AG04449 (cell line): ENCODE measurements at regions of chr18 and their contacts with region 1.

Region 1: DNA sequence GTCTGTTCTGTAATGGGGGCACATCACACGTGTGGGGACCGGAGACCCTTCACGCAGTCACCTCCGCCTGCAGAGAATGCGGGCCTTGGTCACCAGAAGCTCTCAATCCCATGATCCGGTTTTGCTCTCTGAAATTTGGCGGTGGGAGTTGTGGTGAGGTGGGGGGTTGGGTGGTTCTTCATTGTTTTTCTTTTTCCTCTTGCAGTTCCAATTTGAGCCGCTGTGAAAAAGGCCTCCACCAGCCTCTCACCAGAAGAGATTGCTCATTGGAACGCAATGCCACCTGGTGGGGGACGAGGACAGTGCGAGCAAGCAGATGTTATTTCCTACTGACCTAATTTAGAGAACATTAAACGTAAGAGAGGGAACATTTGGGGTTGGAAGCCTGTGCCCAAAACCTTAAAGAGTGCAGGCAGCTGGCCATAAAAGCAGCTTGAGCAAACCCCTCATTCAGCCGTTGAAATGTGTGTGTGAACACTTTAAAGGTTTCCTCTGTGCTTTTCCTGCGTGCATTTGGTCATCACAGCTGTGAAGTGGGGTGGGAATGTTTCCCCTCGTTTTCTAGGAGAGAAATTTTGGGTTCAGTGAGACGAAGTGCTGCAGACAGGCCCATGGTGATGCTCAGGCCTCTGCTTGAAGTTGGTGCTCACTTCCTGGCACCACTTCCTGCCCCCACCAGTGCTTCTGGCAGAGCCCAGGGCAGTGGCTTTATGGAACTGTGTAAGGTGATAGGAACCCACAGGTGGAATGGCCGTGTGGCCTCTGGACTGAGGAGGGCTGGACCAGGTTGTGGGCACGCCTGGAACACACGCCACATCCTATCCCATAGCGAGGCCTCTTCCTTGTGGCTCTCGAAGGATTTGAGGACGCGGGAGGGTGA is 61.7 kb downstream of the ZCCHC2 start:
- DNase-seq: peak; percentile 49
- H3K4me3 ChIP-seq: no peak overlapping the region; the same call in 1 of the 2 replicates
- CTCF ChIP-seq: peak; percentile 98

Region 2: GRCh38 chr18:62437235-62438017 is 147.1 kb before region 1 on chr18:
- CTCF ChIA-PET with region 1: interaction called, 11 read pairs
- POLR2A ChIA-PET with region 1: no interaction called
- DNase-seq: no peak
- H3K4me3 ChIP-seq: no peak overlapping the region
- CTCF ChIP-seq: no peak

Region 3: DNA sequence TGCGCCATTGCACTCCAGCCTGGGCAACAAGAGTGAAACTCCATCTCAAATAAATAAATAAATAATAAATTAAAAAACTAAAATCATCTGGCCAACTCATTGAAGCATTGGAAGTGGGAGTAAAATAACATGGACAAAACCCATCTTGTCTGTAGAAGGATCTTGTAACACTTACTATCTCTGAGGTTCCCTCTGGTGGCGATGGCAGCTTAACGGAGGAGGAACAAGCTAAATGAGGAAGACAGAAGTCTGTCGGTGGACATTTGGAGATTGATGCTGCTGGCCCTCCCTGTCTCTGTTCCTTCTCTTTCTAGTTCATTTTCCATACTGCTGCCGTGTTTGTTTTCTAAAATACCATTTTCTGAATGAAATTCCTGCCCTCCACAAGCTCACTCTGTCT is 18.3 kb before region 1 on chr18:
- CTCF ChIA-PET with region 1: interaction called, 43 read pairs
- POLR2A ChIA-PET with region 1: no interaction called
- DNase-seq: no peak
- H3K4me3 ChIP-seq: no peak overlapping the region
- CTCF ChIP-seq: peak; percentile 14

Region 4: GRCh38 chr18:62596145-62597005 is 11.9 kb after region 1 on chr18:
- CTCF ChIA-PET with region 1: interaction called, 59 read pairs
- POLR2A ChIA-PET with region 1: no interaction called
- DNase-seq: no peak
- H3K4me3 ChIP-seq: peak overlapping the region; percentile 20
- CTCF ChIP-seq: no peak

Region 5: GRCh38 chr18:62714671-62715435 is 130.4 kb after region 1 on chr18:
- CTCF ChIA-PET with region 1: interaction called, 24 read pairs
- POLR2A ChIA-PET with region 1: no interaction called
- DNase-seq: peak; percentile 99
- H3K4me3 ChIP-seq: peak overlapping the region; percentile 76
- CTCF ChIP-seq: peak; percentile 76

Region 6: DNA sequence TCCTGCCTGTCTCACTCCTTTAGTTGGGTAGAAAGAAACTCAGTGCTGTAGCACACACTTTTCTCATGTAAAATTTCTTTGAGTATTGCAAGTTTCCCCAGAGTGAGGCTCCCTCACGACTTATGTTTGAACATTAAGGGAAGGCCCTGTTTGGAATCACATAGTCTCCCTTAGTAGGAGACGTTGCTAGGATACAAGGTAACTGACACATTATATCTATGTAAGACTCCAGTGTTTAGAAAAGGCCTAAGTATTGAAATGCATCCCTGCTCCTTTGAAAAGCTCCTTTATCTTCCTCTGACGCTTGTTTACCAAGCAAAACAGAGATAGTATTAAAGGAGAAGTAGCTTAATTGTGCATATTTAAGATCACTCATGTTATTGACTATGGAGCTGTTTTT is 379.0 kb after region 1 on chr18:
- CTCF ChIA-PET with region 1: interaction called, 42 read pairs
- POLR2A ChIA-PET with region 1: no interaction called
- DNase-seq: no peak
- H3K4me3 ChIP-seq: no peak overlapping the region
- CTCF ChIP-seq: no peak

Region 7: DNA sequence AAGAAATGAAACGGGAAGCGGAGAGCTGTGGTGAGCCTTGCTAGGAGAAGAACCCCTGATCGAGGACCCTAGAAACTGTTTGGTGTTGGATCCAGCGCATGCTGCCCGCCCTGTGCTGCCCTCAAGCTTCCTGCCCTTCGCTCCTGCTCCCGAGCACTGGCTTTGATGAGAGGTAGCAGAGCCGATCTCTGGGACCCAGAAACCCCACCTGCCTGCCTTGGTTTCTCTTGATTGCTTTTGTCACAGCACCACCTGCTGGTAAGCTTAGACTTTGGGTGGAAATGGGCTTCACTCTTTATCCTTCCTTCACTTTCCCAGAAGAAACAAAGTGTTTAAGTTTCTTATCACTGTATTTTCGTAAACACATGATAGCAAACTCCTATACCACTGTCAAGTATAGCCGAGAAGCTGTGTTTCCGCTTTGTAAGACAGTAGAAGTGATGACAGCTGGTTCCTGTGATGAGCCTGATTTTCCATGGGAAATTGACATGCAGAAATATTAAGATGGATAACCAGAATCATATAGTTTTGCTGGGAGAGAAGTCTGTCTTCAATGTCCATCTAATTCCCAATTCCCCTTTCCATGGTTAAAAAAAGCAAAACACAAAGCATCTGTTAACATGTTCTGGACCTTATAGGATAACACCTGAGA is 398.2 kb after region 1 on chr18:
- CTCF ChIA-PET with region 1: interaction called, 243 read pairs
- POLR2A ChIA-PET with region 1: no interaction called
- DNase-seq: no peak
- H3K4me3 ChIP-seq: peak overlapping the region; percentile 12; the same call in 1 of the 2 replicates
- CTCF ChIP-seq: peak; percentile 67